ENCODE measurements at regions of chr11 and their contacts with region 1.

Region 1: DNA sequence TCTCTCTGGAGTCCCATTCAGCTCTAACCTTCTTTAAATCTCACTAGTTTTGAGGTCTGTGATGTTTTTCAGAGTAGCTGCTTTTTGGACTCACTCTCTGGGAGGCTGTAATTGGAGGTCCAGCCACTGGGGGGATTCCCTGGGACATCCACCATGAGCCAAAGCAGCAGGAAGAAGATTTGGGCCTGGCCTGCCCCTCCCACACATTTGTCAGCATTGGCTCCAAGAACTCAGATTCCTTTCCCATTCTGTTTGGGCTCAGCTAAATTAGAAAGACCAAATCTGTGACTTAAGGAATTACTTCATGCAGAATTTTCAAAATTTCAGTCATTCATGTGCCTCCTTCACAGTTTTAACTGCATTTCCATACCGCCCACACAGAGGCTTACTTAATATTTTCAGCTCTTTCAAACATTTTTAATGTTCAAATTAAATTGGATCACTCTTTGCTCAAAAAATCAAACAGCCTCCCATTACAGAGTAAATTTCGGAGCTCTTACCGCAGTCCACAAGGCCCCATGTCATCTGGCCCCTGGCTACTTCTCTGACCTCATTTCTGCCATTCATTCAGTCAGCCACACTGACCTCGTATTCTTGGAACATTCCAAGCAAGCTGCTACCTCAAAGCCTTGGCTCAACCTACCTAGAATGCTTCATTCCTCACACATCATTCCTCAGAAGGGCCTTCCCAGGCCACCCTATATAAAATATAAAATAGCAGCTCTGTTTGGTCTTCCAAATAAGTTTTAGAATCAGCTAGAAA is 54.5 kb upstream of the RRAS2 start:
- DNase-seq: no peak
- H3K4me3 ChIP-seq: no peak overlapping the region
- H3K4me3 Mint-ChIP-seq: no peak overlapping the region
- H3K27ac ChIP-seq: no peak overlapping the region
- H3K27ac Mint-ChIP-seq: peak overlapping the region in 3 of 8 donors; percentile 27 to 57 (median 38)
- H3K4me1 ChIP-seq: peaks cover 20% of the 10 kb centered on the region
- H3K4me1 Mint-ChIP-seq: peaks cover 46 to 56% (median 52%) of the 10 kb centered on the region in 3 donors
- H3K27me3 ChIP-seq: no peaks in the 10 kb centered on the region
- H3K27me3 Mint-ChIP-seq: no peaks in the 10 kb centered on the region

Region 2: GRCh38 chr11:14443638-14444037 is 30.1 kb after region 1 on chr11:
- CTCF ChIA-PET with region 1: no interaction called
- POLR2A ChIA-PET with region 1: no interaction called
- DNase-seq: no peak
- H3K4me3 ChIP-seq: no peak overlapping the region
- H3K4me3 Mint-ChIP-seq: no peak overlapping the region
- H3K27ac ChIP-seq: no peak overlapping the region
- H3K27ac Mint-ChIP-seq: no peak overlapping the region
- H3K4me1 ChIP-seq: peaks cover 24% of the 10 kb centered on the region
- H3K4me1 Mint-ChIP-seq: peaks cover 31 to 47% (median 41%) of the 10 kb centered on the region in 3 donors
- H3K27me3 ChIP-seq: no peaks in the 10 kb centered on the region
- H3K27me3 Mint-ChIP-seq: no peaks in the 10 kb centered on the region

Region 3: GRCh38 chr11:14480716-14481115 is 67.2 kb after region 1 on chr11:
- CTCF ChIA-PET with region 1: no interaction called
- POLR2A ChIA-PET with region 1: interaction called, 10 read pairs
- DNase-seq: no peak
- H3K4me3 ChIP-seq: no peak overlapping the region
- H3K4me3 Mint-ChIP-seq: no peak overlapping the region
- H3K27ac ChIP-seq: no peak overlapping the region
- H3K27ac Mint-ChIP-seq: no peak overlapping the region
- H3K4me1 ChIP-seq: no peaks in the 10 kb centered on the region
- H3K4me1 Mint-ChIP-seq: peaks cover 10 to 25% (median 25%) of the 10 kb centered on the region in 3 donors
- H3K27me3 ChIP-seq: no peaks in the 10 kb centered on the region
- H3K27me3 Mint-ChIP-seq: no peaks in the 10 kb centered on the region